SK-N-SH (cell line): ENCODE measurements at regions of chr12 and their contacts with region 1.

Region 1: GRCh38 chr12:107122452-107122958 is 29.2 kb upstream of the CRY1 start:
- DNase-seq: no peak
- H3K4me3 ChIP-seq: no peak overlapping the region
- H3K27ac ChIP-seq: no peak overlapping the region
- H3K4me1 ChIP-seq: peaks cover 0 to 20% of the 10 kb centered on the region in 2 experiments; a peak in 2 of 4 replicates
- H3K27me3 ChIP-seq: peaks cover 11% of the 10 kb centered on the region; the same call in 1 of the 2 replicates
- CTCF ChIP-seq: no peak
- EP300 ChIP-seq: no peak
- RAD21 ChIP-seq: no peak

Region 2: DNA sequence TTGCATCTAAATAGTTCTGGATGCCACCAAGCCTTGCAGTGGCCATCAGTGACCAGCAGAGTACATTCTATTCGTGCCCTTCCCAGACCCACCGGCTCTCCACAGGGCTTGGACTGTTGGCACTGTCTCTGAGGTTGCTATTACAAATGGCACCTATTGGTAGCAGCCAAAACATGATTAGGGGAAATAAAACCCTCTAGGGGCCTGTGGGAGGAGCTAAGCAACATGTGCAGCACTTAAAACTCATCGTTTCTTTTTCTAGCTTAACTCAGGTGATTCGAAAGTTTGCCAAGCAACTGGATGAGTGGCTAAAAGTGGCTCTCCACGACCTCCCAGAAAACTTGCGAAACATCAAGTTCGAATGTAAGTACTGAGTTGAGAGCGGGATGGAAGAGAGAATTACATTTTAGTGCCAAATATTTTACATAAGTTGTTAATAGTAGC is 413.4 kb before region 1 on chr12:
- CTCF ChIA-PET with region 1: no interaction called
- POLR2A ChIA-PET with region 1: no interaction called
- DNase-seq: no peak
- H3K4me3 ChIP-seq: no peak overlapping the region
- H3K27ac ChIP-seq: no peak overlapping the region
- H3K4me1 ChIP-seq: no peaks in the 10 kb centered on the region
- H3K27me3 ChIP-seq: no peaks in the 10 kb centered on the region
- CTCF ChIP-seq: peak; percentile 14; the same call in 1 of the 2 replicates
- EP300 ChIP-seq: no peak
- RAD21 ChIP-seq: no peak

Region 3: GRCh38 chr12:107109741-107110719 is 12.5 kb before region 1 on chr12:
- CTCF ChIA-PET with region 1: interaction called, 55 read pairs
- POLR2A ChIA-PET with region 1: no interaction called
- DNase-seq: no peak
- H3K4me3 ChIP-seq: no peak overlapping the region
- H3K27ac ChIP-seq: no peak overlapping the region
- H3K4me1 ChIP-seq: no peaks in the 10 kb centered on the region
- H3K27me3 ChIP-seq: no peaks in the 10 kb centered on the region; the same call in 1 of the 2 replicates
- CTCF ChIP-seq: no peak
- EP300 ChIP-seq: no peak
- RAD21 ChIP-seq: no peak